Heart right ventricle (tissue), 16 donors: ENCODE measurements at regions of chr10 and their contacts with region 1.

Region 1: GRCh38 chr10:89553064-89553734 is 17.8 kb upstream of the SLC16A12 start:
- DNase-seq: no peak
- ATAC-seq: peak in 5 of 8 donors; percentile 21 to 76 (median 38)
- H3K4me3 ChIP-seq: no peak overlapping the region
- H3K27ac ChIP-seq: no peak overlapping the region
- H3K4me1 ChIP-seq: peaks cover 0 to 18% (median 5%) of the 10 kb centered on the region in 9 donors
- H3K27me3 ChIP-seq: no peaks in the 10 kb centered on the region
- CTCF ChIP-seq: no peak

Region 2: DNA sequence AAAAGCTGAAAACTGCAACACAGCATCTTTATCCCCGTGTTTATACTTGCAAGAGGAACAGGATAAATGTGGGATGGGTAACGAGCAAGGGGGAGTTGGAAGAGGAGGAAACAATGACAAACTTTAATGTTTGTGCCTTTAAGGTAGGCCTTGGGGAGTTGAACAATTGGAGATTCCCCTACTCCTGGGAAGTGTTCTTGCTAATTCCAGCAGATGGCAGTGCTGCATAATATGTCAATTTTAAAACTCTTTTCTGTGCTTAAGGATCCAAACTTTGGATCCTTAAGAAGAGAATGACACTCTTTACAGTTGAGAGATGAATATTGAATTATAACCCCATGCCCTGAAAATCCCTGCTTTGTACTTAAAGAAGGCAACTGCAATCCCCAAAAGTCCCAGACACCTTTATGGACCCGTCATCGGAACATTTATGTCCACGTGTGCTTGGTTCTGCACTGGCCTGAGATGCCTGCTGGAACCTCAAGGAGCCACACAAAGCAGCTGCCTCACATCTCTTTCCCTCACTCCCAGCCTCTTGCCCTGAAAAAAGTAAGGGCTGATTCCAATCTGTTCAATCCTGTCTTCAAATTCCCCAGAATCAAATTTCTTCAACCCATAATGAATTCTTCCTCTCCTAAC is 126.8 kb before region 1 on chr10:
- intact Hi-C with region 1: loop called in 4 of 10 experiments (anchors 2 to 5 kb)
- DNase-seq: peak in 1 of 2 donors; percentile 44
- ATAC-seq: peak; percentile 50 to 87 (median 78)
- H3K4me3 ChIP-seq: no peak overlapping the region
- H3K27ac ChIP-seq: no peak overlapping the region
- H3K4me1 ChIP-seq: peaks cover 0 to 36% (median 4%) of the 10 kb centered on the region in 9 donors
- H3K27me3 ChIP-seq: no peaks in the 10 kb centered on the region
- CTCF ChIP-seq: peak; percentile 76 to 90 (median 84)

Region 3: DNA sequence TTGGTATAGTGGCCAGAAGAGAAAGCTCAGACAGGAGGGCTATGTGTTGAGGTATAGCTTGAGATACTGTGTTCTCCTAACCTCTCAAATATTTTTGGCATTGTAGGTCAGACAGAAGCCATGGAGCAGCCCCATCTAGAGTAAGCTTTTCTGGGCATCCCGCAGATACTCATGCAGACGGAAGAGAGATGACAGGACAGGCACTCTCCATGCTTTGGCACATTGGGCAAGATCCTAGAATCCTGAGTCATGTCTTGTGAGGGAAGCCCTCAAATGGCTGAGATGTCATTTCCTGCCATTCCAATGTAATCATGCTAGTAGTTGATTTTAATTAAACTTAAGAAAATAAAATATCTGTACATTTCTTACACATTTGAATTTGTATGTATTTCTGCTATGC is 131.4 kb after region 1 on chr10:
- intact Hi-C with region 1: no loop called
- DNase-seq: no peak
- ATAC-seq: no peak
- H3K4me3 ChIP-seq: no peak overlapping the region
- H3K27ac ChIP-seq: no peak overlapping the region
- H3K4me1 ChIP-seq: peaks cover 0 to 6% (median 0%) of the 10 kb centered on the region in 9 donors
- H3K27me3 ChIP-seq: no peaks in the 10 kb centered on the region
- CTCF ChIP-seq: no peak